ENCODE measurements at regions of chr5 and their contacts with region 1.

Region 1: GRCh38 chr5:65925601-65926275 is 637 bp upstream of the ERBIN start:
- DNase-seq: peak; percentile 88
- H3K4me3 ChIP-seq: peak overlapping the region; percentile 89 to 100 (median 99)
- H3K27ac ChIP-seq: peak overlapping the region; percentile 96
- H3K4me1 ChIP-seq: peaks cover 20% of the 10 kb centered on the region
- H3K27me3 ChIP-seq: no peaks in the 10 kb centered on the region
- CTCF ChIP-seq: peak; percentile 20 to 42
- POLR2A ChIP-seq: peak; percentile 55

Region 2: GRCh38 chr5:65721720-65722574 is 203.8 kb before region 1 on chr5 and contains the starts of genes NLN and SGTB:
- CTCF ChIA-PET with region 1: no interaction called
- POLR2A ChIA-PET with region 1: no interaction called
- dilution Hi-C with region 1: no loop called
- intact Hi-C with region 1: loop called (anchors 1 kb)
- DNase-seq: peak; percentile 88
- H3K4me3 ChIP-seq: peak within 1 kb of the TSS; percentile 96 to 99 (median 98)
- H3K27ac ChIP-seq: peak within 1 kb of the TSS; percentile 70
- H3K4me1 ChIP-seq: peaks cover 23% of the 10 kb centered on the region
- H3K27me3 ChIP-seq: no peaks in the 10 kb centered on the region
- CTCF ChIP-seq: no peak
- POLR2A ChIP-seq: peak; percentile 37
- total RNA-seq, gene NLN: 62.8 and 63.3 TPM in 2 replicates
- total RNA-seq, gene SGTB: 14.1 and 16.4 TPM in 2 replicates

Region 3: GRCh38 chr5:65760504-65761275 is 165.0 kb before region 1 on chr5:
- CTCF ChIA-PET with region 1: interaction called, 4 read pairs
- POLR2A ChIA-PET with region 1: no interaction called
- dilution Hi-C with region 1: no loop called
- intact Hi-C with region 1: loop called (anchors 1 kb)
- DNase-seq: peak; percentile 86
- H3K4me3 ChIP-seq: no peak overlapping the region
- H3K27ac ChIP-seq: no peak overlapping the region
- H3K4me1 ChIP-seq: peaks cover 7% of the 10 kb centered on the region
- H3K27me3 ChIP-seq: no peaks in the 10 kb centered on the region
- CTCF ChIP-seq: peak; percentile 19 to 47
- POLR2A ChIP-seq: no peak

Region 4: DNA sequence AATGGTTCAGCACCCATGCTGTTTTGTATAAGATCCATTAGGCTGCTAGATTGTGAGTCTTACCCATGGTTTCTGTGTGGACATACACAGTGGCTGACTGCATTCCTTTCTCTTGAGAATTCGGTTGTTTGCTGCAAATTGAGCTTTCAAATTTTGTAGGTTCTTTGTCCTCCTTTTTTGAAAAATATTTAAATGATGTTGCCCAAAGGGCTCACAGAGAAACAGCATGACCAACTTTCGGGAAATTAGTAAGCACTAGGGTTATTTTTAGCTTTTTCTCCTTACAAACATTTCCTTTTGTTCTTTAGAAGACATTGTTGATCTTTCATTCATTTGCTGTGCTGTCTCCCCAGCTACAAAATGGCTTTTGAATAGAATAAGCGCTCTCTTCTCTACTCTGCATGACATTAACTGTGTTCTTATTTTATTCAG is 124.4 kb before region 1 on chr5:
- CTCF ChIA-PET with region 1: no interaction called
- POLR2A ChIA-PET with region 1: no interaction called
- dilution Hi-C with region 1: no loop called
- intact Hi-C with region 1: loop called (anchors 1 kb)
- DNase-seq: peak; percentile 79
- H3K4me3 ChIP-seq: peak overlapping the region in 1 of 3 experiments; percentile 17
- H3K27ac ChIP-seq: peak overlapping the region; percentile 47
- H3K4me1 ChIP-seq: peaks cover 14% of the 10 kb centered on the region
- H3K27me3 ChIP-seq: no peaks in the 10 kb centered on the region
- CTCF ChIP-seq: no peak
- POLR2A ChIP-seq: no peak

Region 5: GRCh38 chr5:65874241-65874640 is 51.5 kb before region 1 on chr5:
- CTCF ChIA-PET with region 1: no interaction called
- POLR2A ChIA-PET with region 1: interaction called, 13 read pairs
- dilution Hi-C with region 1: no loop called
- intact Hi-C with region 1: no loop called
- DNase-seq: peak; percentile 45
- H3K4me3 ChIP-seq: no peak overlapping the region
- H3K27ac ChIP-seq: no peak overlapping the region
- H3K4me1 ChIP-seq: peaks cover 8% of the 10 kb centered on the region
- H3K27me3 ChIP-seq: no peaks in the 10 kb centered on the region
- CTCF ChIP-seq: no peak
- POLR2A ChIP-seq: no peak

Region 6: GRCh38 chr5:66010476-66010875 is 84.7 kb after region 1 on chr5:
- CTCF ChIA-PET with region 1: no interaction called
- POLR2A ChIA-PET with region 1: no interaction called
- dilution Hi-C with region 1: no loop called
- intact Hi-C with region 1: loop called (anchors 5 kb)
- DNase-seq: no peak
- H3K4me3 ChIP-seq: no peak overlapping the region
- H3K27ac ChIP-seq: no peak overlapping the region
- H3K4me1 ChIP-seq: no peaks in the 10 kb centered on the region
- H3K27me3 ChIP-seq: no peaks in the 10 kb centered on the region
- CTCF ChIP-seq: no peak
- POLR2A ChIP-seq: no peak